PC-9 (cell line): ENCODE measurements at regions of chr19 and their contacts with region 1.

Region 1: DNA sequence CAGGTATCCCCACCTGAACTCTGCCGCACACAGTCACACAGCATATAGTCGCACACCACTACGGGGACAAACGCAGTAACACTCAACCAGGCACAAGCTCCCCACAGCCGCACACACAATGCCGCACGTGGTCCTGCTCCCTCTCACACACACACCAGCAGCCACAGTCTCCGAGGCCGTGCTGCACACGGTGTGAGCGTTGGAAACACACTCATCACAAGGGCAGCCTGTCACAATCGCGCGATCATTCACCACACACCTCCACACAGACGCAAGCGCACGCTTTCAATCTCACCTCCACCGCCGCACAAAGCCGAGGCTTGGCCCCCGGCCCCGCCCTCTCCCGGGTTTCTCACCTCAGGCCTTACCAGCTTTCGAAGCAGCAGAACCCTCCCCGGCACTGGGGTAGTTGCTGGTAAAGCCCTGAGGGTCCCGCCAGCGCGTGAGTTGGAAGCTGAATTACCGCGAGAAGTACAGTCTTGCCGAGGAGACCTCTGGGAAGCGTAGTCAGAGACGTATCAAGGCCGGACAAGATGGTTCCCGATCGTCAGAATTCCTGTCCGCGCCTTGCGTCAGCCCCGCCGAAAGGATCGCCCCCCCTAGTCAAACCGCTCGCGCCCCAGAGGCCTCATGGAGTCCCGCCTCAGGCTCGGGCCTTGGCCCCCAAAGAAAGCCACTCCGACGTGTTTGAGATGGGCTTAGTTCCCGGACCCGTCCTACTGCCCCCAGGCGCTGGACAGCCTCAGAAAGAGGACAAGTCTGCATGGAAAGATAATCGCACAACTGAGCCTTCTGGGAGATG is at the start of gene ZNF566:
- DNase-seq: peak; percentile 94 to 95
- H3K4me3 ChIP-seq: peak within 1 kb of the TSS; percentile 87
- H3K27ac ChIP-seq: peak within 1 kb of the TSS; percentile 96
- H3K4me1 ChIP-seq: peaks cover 6% of the 10 kb centered on the region; the same call in 1 of the 2 replicates
- H3K27me3 ChIP-seq: no peaks in the 10 kb centered on the region
- CTCF ChIP-seq: no peak
- total RNA-seq, gene ZNF566: 6.0 and 7.9 TPM in 2 replicates

Region 2: GRCh38 chr19:36214386-36215275 is 274.7 kb before region 1 on chr19 and contains the starts of genes ZNF146 and ZNF565:
- CTCF ChIA-PET with region 1: no interaction called
- POLR2A ChIA-PET with region 1: interaction called, 4 read pairs
- intact Hi-C with region 1: loop called (anchors 5 kb)
- DNase-seq: peak; percentile 95
- H3K4me3 ChIP-seq: peak within 1 kb of the TSS; percentile 70
- H3K27ac ChIP-seq: peak within 1 kb of the TSS; percentile 57
- H3K4me1 ChIP-seq: peaks cover 5% of the 10 kb centered on the region
- H3K27me3 ChIP-seq: no peaks in the 10 kb centered on the region
- CTCF ChIP-seq: no peak
- total RNA-seq, gene ZNF146: 53.1 and 68.0 TPM in 2 replicates
- total RNA-seq, gene ZNF565: 3.3 and 4.3 TPM in 2 replicates

Region 3: GRCh38 chr19:36837906-36838783 is 348.8 kb after region 1 on chr19 and contains the start of gene ZNF790:
- CTCF ChIA-PET with region 1: no interaction called
- POLR2A ChIA-PET with region 1: no interaction called
- intact Hi-C with region 1: loop called (anchors 2 kb)
- DNase-seq: peak; percentile 80 to 82
- H3K4me3 ChIP-seq: peak within 1 kb of the TSS; percentile 74
- H3K27ac ChIP-seq: no peak within 1 kb of the TSS
- H3K4me1 ChIP-seq: no peaks in the 10 kb centered on the region
- H3K27me3 ChIP-seq: no peaks in the 10 kb centered on the region
- CTCF ChIP-seq: no peak
- total RNA-seq, gene ZNF790: 5.0 and 5.9 TPM in 2 replicates

Region 4: GRCh38 chr19:36973021-36973843 is 483.9 kb after region 1 on chr19:
- CTCF ChIA-PET with region 1: no interaction called
- POLR2A ChIA-PET with region 1: no interaction called
- intact Hi-C with region 1: no loop called
- DNase-seq: peak in 1 of 2 experiments; percentile 48
- H3K4me3 ChIP-seq: no peak overlapping the region
- H3K27ac ChIP-seq: no peak overlapping the region
- H3K4me1 ChIP-seq: no peaks in the 10 kb centered on the region
- H3K27me3 ChIP-seq: no peaks in the 10 kb centered on the region
- CTCF ChIP-seq: no peak